Astrocyte of the cerebellum (primary cell): ENCODE measurements at regions of chr15 and their contacts with region 1.

Region 1: GRCh38 chr15:99213187-99213811 is 36.1 kb downstream of the TTC23 start:
- DNase-seq: peak; percentile 53
- H3K4me3 ChIP-seq: no peak overlapping the region
- CTCF ChIP-seq: peak; percentile 89

Region 2: GRCh38 chr15:98779463-98780071 is 433.7 kb before region 1 on chr15:
- in situ Hi-C with region 1: loop called (anchors 25 kb)
- DNase-seq: peak; percentile 38
- H3K4me3 ChIP-seq: no peak overlapping the region
- CTCF ChIP-seq: peak; percentile 96

Region 3: GRCh38 chr15:99104788-99105513 is 108.3 kb before region 1 on chr15 and contains the start of gene SYNM:
- in situ Hi-C with region 1: loop called (anchors 5 kb)
- DNase-seq: peak; percentile 32
- H3K4me3 ChIP-seq: peak within 1 kb of the TSS; percentile 42
- CTCF ChIP-seq: peak; percentile 54